ENCODE measurements at regions of chr4 and their contacts with region 1.

Region 1: GRCh38 chr4:122666527-122667245 is 45.8 kb upstream of the IL21 start:
- DNase-seq: peak; percentile 34
- H3K4me3 Mint-ChIP-seq: peak overlapping the region; percentile 45
- H3K27ac Mint-ChIP-seq: peak overlapping the region; percentile 96
- H3K4me1 Mint-ChIP-seq: peaks cover 82% of the 10 kb centered on the region
- H3K27me3 Mint-ChIP-seq: no peaks in the 10 kb centered on the region

Region 2: DNA sequence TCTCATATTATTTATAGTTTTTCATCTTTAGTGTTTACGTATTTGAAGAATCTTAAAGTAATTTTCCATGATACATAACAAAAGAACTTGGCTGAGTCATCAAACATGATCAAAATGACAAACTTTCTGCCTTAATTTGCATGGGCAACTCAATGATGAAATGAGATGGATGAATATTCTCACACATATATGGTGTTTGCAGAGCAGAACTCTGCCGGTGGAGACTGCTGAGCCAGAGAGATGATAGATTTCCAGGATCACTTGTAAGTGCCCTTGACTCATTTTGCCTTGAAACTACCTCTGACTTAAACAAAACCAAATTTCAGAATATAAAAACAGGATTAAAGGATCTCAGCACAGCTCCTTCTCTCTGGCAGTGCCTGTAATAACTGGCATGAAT is 753.0 kb before region 1 on chr4:
- CTCF ChIA-PET with region 1: no interaction called
- intact Hi-C with region 1: no loop called
- DNase-seq: no peak
- H3K4me3 Mint-ChIP-seq: no peak overlapping the region
- H3K27ac Mint-ChIP-seq: no peak overlapping the region
- H3K4me1 Mint-ChIP-seq: peaks cover 5% of the 10 kb centered on the region
- H3K27me3 Mint-ChIP-seq: peaks cover 2% of the 10 kb centered on the region

Region 3: GRCh38 chr4:122508083-122508482 is 158.6 kb before region 1 on chr4:
- CTCF ChIA-PET with region 1: no interaction called
- intact Hi-C with region 1: loop called (anchors 2 kb)
- DNase-seq: no peak
- H3K4me3 Mint-ChIP-seq: peak overlapping the region; percentile 53
- H3K27ac Mint-ChIP-seq: peak overlapping the region; percentile 98
- H3K4me1 Mint-ChIP-seq: peaks cover 89% of the 10 kb centered on the region
- H3K27me3 Mint-ChIP-seq: no peaks in the 10 kb centered on the region

Region 4: GRCh38 chr4:122617597-122618593 is 48.8 kb before region 1 on chr4:
- CTCF ChIA-PET with region 1: interaction called, 3 read pairs
- intact Hi-C with region 1: loop called (anchors 1 kb)
- DNase-seq: no peak
- H3K4me3 Mint-ChIP-seq: peak overlapping the region; percentile 88
- H3K27ac Mint-ChIP-seq: peak overlapping the region; percentile 97
- H3K4me1 Mint-ChIP-seq: peaks cover 70% of the 10 kb centered on the region
- H3K27me3 Mint-ChIP-seq: no peaks in the 10 kb centered on the region

Region 5: DNA sequence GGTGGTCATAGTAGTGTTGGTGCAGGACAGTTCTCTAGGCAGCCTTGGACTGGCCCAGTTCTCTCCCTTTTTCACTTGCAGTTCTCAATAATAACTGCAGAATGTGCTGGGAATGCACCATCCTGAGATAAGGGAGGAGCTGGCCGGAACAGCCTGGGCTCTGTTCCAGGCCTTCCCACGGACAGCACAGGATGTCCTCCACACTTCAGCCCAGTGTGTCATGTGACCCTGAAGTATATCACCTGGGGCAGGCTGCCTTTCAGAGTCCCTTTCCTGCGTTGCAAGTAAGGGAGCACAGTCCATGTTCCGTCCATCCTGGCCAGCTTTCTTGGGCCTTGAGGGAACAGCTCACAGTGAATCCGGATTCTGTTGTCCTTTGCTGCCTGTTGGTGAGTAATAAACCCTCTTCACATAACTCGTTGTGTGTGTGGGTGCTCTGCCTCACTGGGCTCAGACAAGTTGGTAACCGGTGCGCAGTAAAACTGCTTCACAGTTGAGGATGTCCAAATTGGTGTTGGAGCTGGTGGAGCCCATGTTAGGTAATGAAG is 33.6 kb after region 1 on chr4:
- CTCF ChIA-PET with region 1: interaction called, 6 read pairs
- intact Hi-C with region 1: loop called (anchors 1 kb)
- DNase-seq: no peak
- H3K4me3 Mint-ChIP-seq: peak overlapping the region; percentile 69
- H3K27ac Mint-ChIP-seq: peak overlapping the region; percentile 99
- H3K4me1 Mint-ChIP-seq: peaks cover 56% of the 10 kb centered on the region
- H3K27me3 Mint-ChIP-seq: peaks cover 4% of the 10 kb centered on the region

Region 6: DNA sequence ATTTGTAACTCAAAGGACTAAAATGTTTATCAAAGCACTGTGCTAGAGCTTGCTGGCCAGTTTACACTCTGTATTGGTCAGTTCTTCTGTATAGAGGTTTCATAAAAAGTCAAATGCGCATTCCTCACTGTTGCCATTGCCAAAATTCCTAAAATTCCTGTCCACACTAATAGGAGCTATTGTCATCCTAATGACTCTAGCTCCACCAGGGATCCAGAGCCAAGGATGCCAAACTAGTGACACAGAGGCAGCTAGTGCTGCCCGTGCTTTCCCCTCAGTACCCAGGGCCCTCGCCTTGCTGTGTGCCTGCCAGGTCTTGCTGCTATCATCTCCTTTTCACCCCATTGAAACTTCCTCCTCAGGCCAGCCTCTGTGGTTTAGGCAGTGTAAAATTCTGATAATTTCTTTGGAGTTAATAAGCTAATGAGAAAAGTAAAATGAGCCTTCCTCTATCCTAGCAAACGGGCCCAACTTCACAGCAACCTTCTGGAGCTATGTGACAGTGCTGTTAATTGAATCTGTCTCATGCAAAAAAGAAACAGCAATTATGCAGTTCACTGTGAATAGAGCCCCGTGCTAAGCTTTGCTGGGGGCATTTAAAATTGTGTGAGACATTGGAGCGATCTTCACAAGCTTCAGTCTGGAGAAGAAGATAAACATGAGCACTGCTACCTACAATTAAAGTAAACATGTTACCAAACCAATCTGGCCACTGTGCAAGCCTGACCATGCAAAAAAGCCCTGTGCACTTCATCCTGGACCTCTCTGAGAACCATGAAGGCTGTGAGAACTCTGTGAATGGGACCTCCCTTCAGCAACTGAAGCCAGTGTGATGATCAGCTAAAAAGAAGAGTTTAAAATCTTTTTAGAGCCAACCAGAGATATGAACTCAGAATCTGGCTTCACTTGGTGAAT is 116.9 kb after region 1 on chr4:
- CTCF ChIA-PET with region 1: no interaction called
- intact Hi-C with region 1: loop called (anchors 2 kb)
- DNase-seq: no peak
- H3K4me3 Mint-ChIP-seq: no peak overlapping the region
- H3K27ac Mint-ChIP-seq: no peak overlapping the region
- H3K4me1 Mint-ChIP-seq: peaks cover 19% of the 10 kb centered on the region
- H3K27me3 Mint-ChIP-seq: peaks cover 16% of the 10 kb centered on the region

Region 7: GRCh38 chr4:123463869-123464268 is 797.2 kb after region 1 on chr4:
- CTCF ChIA-PET with region 1: no interaction called
- intact Hi-C with region 1: no loop called
- DNase-seq: no peak
- H3K4me3 Mint-ChIP-seq: no peak overlapping the region
- H3K27ac Mint-ChIP-seq: no peak overlapping the region
- H3K4me1 Mint-ChIP-seq: peaks cover 3% of the 10 kb centered on the region
- H3K27me3 Mint-ChIP-seq: peaks cover 4% of the 10 kb centered on the region

Region 8: DNA sequence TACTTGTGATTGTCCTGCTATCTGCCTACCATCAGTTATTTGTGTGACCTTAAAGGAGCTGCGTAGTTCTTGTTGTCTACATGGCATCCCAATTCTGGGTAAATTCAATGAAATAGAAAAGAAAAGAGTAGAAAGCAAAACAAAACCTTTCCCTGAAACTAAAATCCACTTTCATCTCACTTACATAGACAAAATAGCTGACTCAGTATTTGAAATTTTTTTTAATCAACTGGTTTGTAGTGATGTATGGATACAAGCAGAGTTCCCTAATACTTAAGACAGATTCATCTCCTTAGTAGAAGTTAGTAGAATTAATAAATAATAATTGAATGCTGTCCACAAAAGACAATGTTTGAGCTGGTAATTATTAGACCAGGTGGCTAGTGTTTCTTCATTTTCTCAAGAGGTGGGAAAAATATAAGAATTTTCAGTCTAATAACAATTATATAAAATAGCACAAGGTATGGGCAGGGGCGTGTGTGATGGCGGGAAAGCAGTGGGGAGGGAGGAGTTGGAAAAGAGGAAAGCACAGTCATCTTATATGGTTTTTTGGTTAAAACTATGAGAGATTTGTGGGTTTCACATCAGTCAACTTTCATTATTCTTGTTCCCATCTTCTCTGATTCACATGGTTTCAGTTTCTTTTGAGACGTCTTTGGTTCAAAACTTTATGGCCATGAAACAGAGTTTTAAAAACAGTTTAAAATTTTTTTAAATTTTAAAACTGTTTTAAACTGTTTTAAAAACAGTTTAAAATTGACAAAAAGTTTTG is 1005.1 kb after region 1 on chr4:
- CTCF ChIA-PET with region 1: no interaction called
- intact Hi-C with region 1: loop called (anchors 2 kb)
- DNase-seq: peak; percentile 55
- H3K4me3 Mint-ChIP-seq: no peak overlapping the region
- H3K27ac Mint-ChIP-seq: no peak overlapping the region
- H3K4me1 Mint-ChIP-seq: peaks cover 17% of the 10 kb centered on the region
- H3K27me3 Mint-ChIP-seq: peaks cover 44% of the 10 kb centered on the region